ENCODE measurements at regions of chr17 and their contacts with region 1.

Region 1: DNA sequence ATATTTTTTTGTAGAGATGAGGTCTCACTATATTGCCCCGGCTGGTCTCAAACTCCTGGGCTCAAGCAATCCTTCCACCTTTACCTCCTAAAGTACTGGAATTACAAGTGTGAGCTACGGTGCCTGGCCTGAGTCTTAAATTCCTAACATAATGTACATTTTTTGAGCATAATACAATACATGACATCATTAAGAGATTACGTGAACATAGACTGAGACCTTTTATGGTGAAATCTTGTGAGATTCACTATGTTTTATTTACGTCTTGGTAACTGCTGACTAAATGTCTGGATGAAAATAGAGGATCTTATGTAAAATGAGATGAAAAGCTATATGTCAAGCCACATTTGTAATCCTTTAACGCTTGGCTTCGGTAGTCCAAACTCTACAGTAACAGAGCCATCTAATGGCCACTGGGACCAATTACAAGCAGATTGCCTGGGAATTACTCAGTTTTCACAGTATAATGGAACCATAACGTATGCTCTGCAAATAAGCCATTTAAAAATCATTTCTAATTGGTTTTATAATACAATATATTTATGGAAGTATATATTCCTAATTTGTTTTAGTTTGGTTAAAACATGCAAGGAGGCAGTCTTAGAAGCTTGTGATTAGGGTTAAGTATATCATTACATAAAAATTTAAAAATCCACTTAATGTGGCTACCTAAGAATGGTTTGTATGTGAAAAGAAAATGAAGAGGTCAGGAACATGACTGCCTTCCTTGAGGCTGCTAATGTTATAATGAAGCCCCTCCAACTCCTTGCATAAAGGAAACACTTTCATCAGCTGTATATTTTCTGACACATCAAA is 8.1 kb upstream of the EFCAB13 start:
- DNase-seq: no peak
- ATAC-seq: peak; percentile 98
- H3K4me3 Mint-ChIP-seq: no peak overlapping the region
- H3K27ac Mint-ChIP-seq: no peak overlapping the region
- H3K4me1 Mint-ChIP-seq: peaks cover 2% of the 10 kb centered on the region
- H3K27me3 Mint-ChIP-seq: no peaks in the 10 kb centered on the region
- CTCF ChIP-seq: peak; percentile 28

Region 2: GRCh38 chr17:47162013-47162622 is 153.5 kb before region 1 on chr17:
- CTCF ChIA-PET with region 1: interaction called, 3 read pairs
- POLR2A ChIA-PET with region 1: no interaction called
- intact Hi-C with region 1: loop called (anchors 5 kb)
- DNase-seq: no peak
- ATAC-seq: no peak
- H3K4me3 Mint-ChIP-seq: peak overlapping the region; percentile 67
- H3K27ac Mint-ChIP-seq: peak overlapping the region; percentile 92
- H3K4me1 Mint-ChIP-seq: peaks cover 32% of the 10 kb centered on the region
- H3K27me3 Mint-ChIP-seq: no peaks in the 10 kb centered on the region
- CTCF ChIP-seq: no peak

Region 3: GRCh38 chr17:47229535-47230443 is 85.9 kb before region 1 on chr17:
- CTCF ChIA-PET with region 1: interaction called, 129 read pairs
- POLR2A ChIA-PET with region 1: interaction called, 17 read pairs
- intact Hi-C with region 1: loop called (anchors 1 kb)
- DNase-seq: peak; percentile 48
- ATAC-seq: peak; percentile 95
- H3K4me3 Mint-ChIP-seq: peak overlapping the region; percentile 56
- H3K27ac Mint-ChIP-seq: no peak overlapping the region
- H3K4me1 Mint-ChIP-seq: peaks cover 26% of the 10 kb centered on the region
- H3K27me3 Mint-ChIP-seq: no peaks in the 10 kb centered on the region
- CTCF ChIP-seq: peak; percentile 83

Region 4: DNA sequence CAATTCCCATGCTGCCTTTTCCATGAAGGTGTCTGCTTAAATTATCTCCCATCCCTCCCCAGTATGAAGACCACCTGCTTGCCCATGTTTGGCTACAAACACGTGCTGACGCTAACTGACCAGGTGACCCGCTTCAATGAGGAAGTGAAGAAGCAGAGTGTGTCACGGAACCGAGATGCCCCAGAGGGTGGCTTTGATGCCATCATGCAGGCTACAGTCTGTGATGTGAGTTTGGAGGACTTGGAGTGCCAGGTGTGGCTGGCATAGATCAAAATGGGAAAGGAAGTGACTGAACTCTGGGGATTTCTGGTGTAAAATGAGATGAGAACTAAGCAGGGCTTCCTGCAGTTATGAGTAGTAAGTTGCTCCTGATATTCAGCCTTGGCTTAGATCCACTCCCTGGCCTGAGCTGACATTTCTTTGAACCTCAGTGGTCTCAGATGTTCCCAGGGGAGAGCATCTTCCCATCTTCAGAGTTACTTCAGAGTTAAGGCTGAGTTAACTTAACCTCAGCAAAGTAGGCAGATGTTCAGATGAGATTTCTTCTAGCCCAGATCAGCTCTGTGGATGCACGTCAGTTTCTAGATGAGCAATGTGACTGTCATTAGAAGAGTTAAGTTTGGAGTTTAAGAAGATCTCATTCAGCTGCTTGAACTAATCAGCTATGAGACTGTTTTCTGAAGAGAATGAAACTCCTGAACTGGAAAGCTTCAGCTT is 29.3 kb before region 1 on chr17:
- CTCF ChIA-PET with region 1: interaction called, 47 read pairs
- POLR2A ChIA-PET with region 1: interaction called, 6 read pairs
- intact Hi-C with region 1: loop called (anchors 2 kb)
- DNase-seq: peak; percentile 50
- ATAC-seq: peak; percentile 84
- H3K4me3 Mint-ChIP-seq: peak overlapping the region; percentile 57
- H3K27ac Mint-ChIP-seq: peak overlapping the region; percentile 92
- H3K4me1 Mint-ChIP-seq: peaks cover 54% of the 10 kb centered on the region
- H3K27me3 Mint-ChIP-seq: no peaks in the 10 kb centered on the region
- CTCF ChIP-seq: no peak

Region 5: GRCh38 chr17:47335101-47335936 is 19.7 kb after region 1 on chr17:
- CTCF ChIA-PET with region 1: no interaction called
- POLR2A ChIA-PET with region 1: no interaction called
- intact Hi-C with region 1: no loop called
- DNase-seq: no peak
- ATAC-seq: no peak
- H3K4me3 Mint-ChIP-seq: no peak overlapping the region
- H3K27ac Mint-ChIP-seq: no peak overlapping the region
- H3K4me1 Mint-ChIP-seq: peaks cover 2% of the 10 kb centered on the region
- H3K27me3 Mint-ChIP-seq: no peaks in the 10 kb centered on the region
- CTCF ChIP-seq: no peak